ENCODE measurements at regions of chr6 and their contacts with region 1.

Region 1: GRCh38 chr6:128520436-128521281 is at the start of gene PTPRK:
- DNase-seq: peak; percentile 88 to 98 (median 95)

Region 2: DNA sequence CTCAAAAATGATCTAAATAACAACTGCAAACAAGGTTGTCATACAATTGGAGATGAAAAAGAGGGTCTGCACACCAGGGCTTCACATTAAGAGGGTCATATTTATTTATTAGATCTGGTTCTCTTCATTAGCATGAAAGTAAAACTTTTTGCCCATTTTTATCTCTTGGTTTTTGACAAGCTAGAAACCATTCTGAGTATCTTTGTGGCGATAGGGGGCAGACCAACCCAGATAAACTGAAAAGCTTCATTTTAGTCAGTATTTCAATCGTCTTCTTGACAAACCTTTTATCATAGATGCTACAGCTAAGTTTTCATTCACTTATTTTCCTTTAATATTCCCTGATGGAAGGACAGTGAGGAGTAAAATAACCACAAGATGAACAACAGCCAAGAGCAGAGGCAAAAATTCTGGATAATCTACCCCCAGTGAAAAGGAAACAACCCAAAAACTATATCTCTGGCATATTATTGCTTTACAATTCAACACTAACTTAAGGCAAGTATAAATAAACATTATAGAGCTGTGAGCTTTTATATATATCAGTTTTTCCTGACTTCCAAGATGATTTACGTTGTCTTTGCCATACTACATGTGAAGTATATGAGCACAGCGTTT is 665.0 kb before region 1 on chr6:
- intact Hi-C with region 1: loop called (anchors 10 kb)
- DNase-seq: peak in 35 of 42 donors; percentile 3 to 87 (median 55)

Region 3: DNA sequence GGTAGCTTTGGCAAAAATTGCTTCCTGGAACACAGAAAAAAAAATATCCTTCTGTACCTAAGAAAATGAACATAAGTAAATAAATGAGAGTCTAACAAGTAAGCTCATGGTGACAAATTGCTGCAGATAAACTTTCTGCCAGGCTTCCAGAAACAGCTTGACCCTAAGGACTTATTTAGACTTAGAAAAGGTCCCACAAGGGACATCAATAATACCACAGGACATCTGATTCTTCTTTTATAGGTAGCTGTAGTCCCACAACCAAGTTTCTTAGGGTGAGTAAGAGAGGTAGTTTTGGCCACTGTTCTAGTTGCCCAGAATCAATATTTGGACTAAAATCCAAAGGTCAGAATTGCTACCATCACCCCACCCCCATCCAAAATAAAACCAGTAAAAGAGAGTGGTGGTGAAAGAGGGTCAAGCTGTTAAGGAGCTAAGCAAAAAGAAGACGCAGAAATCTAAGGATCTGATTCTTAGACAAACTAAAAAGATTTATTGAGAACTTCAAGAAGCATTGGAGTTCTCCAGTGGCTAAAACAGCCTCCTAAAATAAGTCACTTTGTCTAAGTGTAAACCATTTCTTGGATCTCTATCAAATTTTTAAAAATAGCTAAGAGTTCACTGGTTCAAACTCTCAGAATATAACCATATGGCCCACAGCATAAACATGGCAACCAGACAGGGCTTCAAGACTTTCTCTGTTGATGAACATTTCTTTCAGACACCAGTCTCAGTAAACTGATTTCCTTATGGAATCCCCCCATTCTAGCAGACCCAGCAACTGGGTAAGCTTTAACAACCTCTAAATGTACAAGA is 180.8 kb before region 1 on chr6:
- intact Hi-C with region 1: loop called (anchors 10 kb)
- DNase-seq: no peak

Region 4: DNA sequence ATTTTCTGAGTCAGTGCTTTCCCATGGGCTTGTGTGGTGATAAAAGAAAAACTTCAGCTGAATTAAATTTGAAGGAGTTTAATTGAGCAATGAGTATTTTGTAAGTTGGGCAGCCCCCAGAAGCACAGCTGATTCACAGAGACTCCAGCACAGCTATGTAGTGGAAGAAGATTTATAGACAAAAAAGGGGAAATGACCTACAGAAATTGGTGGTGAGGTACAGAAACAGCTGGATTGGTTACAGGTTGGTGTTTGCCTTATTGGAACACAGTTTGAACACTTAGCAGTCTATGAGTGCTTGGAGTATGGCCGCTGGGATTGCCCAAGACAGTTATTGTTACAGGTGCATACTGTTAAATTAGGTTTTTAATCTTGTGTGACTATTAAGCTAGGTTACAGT is 96.6 kb after region 1 on chr6:
- intact Hi-C with region 1: no loop called
- DNase-seq: no peak

Region 5: DNA sequence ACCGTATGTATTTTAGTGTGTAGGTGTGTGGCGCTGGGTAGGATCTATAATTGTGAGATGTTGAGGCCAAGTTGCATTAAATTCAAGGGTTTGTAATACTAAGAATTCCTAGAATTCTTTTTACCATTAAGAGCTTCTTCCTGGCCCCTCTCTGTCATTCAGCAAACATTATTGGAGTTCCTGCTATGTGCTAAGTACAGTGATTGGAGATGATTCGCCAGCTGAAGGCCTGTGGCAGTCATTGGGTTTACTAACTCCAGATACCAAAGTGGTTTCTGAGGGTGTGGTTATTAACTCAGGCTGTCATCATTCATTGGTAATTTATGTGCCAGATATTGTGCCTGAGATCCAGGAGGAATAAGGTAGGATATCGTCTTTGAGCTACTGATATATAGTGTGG is 529.4 kb after region 1 on chr6:
- intact Hi-C with region 1: no loop called
- DNase-seq: no peak

Measured in head of caudate nucleus (tissue), 42 donors.